ENCODE measurements at regions of chr19 and their contacts with region 1.

Region 1: DNA sequence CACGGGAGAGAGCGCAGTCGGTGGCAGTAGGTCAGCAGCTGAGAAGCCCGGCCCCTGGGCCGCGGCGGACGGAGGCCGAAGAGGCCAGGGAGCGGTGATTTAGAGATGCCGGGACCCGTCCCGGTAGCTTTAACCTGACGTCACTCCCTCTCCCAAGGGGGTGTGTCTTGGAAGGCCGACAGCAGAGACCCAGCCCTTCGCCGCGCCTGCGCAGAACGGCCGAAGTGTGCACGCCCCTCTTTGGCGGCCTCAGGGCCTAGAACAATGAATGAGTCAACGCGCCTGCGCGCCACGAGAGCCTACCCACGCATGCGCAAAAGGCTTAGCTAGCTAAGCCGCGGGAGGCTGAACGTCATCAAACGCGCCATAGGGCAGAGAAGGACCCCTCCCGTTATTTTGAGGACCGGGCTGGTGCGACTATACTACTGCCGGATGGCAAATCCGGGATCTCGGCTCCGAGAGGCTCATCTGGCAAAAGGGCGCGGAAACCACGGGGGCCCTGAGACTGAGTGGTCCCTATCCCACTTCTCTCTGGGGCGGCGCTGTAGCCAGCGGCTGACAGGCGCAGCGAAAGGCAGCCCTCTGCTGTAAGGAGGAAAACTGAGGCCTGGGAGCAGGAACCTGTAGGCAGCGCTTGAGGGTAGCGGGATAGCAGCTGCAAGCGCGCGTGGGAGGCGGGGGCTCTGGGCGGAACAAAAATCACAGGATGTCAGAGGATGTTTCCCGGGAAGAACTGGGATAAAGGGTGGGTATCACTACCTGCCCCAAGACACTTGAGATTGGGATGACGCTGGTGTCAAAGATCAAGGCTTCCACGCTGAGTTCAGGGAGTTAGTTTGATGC is at the starts of genes IRGQ and ZNF576:
- DNase-seq: peak; percentile 100
- H3K4me3 ChIP-seq: peak within 1 kb of the TSS; percentile 86
- H3K27ac ChIP-seq: peak within 1 kb of the TSS; percentile 77
- H3K4me1 ChIP-seq: peaks cover 13% of the 10 kb centered on the region
- CTCF ChIP-seq: peak; percentile 46; the same call in 1 of the 2 replicates
- total RNA-seq, gene IRGQ: 6.4 and 23.0 TPM in 2 replicates
- total RNA-seq, gene ZNF576: 11.6 and 20.2 TPM in 2 replicates

Region 2: DNA sequence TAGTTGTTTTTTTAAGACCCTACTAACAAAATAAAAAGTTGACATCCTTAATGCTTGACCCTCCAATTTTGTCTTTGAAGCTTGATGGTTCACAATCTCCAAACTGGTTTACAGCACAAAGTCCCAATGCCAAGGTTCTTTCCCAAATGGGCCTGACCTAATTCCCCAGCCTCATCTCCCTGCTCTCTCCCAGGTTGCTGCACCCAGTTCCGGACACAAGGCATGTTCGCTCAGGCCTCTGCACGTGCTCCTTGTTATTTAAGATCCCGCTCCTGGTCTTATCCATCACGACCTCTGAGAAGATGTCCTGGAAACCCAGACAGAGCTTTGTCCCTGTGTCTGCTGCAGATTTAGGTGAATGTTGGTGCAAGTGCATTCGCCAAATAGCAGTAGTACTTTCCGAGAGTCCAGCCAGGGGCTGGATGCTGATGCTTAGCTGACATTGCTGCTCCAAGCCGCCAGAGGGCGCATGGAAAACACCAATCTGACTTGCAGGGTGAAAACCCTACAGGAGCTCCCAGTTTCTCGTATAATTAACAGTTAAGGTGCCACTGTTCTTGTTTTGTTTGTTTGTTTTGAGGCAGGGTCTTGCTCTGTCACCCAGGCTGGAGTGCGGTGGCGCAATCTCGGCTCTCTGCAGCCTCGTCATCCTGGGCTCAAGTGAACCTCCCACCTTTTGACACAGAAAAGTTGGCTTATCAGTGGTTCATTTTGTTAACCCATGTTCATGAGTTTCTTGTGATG is 149.3 kb before region 1 on chr19:
- CTCF ChIA-PET with region 1: no interaction called
- POLR2A ChIA-PET with region 1: no interaction called
- intact Hi-C with region 1: loop called (anchors 10 kb)
- DNase-seq: peak; percentile 77
- H3K4me3 ChIP-seq: no peak overlapping the region
- H3K27ac ChIP-seq: no peak overlapping the region
- H3K4me1 ChIP-seq: no peaks in the 10 kb centered on the region
- CTCF ChIP-seq: peak; percentile 94

Region 3: GRCh38 chr19:43532962-43533545 is 63.2 kb before region 1 on chr19 and contains the start of gene ZNF575:
- CTCF ChIA-PET with region 1: interaction called, 5 read pairs
- POLR2A ChIA-PET with region 1: no interaction called
- intact Hi-C with region 1: loop called (anchors 10 kb)
- DNase-seq: peak; percentile 75
- H3K4me3 ChIP-seq: peak within 1 kb of the TSS; percentile 61
- H3K27ac ChIP-seq: peak within 1 kb of the TSS; percentile 40
- H3K4me1 ChIP-seq: peaks cover 20% of the 10 kb centered on the region
- CTCF ChIP-seq: no peak
- total RNA-seq, gene ZNF575: not detected in 2 replicates

Region 4: DNA sequence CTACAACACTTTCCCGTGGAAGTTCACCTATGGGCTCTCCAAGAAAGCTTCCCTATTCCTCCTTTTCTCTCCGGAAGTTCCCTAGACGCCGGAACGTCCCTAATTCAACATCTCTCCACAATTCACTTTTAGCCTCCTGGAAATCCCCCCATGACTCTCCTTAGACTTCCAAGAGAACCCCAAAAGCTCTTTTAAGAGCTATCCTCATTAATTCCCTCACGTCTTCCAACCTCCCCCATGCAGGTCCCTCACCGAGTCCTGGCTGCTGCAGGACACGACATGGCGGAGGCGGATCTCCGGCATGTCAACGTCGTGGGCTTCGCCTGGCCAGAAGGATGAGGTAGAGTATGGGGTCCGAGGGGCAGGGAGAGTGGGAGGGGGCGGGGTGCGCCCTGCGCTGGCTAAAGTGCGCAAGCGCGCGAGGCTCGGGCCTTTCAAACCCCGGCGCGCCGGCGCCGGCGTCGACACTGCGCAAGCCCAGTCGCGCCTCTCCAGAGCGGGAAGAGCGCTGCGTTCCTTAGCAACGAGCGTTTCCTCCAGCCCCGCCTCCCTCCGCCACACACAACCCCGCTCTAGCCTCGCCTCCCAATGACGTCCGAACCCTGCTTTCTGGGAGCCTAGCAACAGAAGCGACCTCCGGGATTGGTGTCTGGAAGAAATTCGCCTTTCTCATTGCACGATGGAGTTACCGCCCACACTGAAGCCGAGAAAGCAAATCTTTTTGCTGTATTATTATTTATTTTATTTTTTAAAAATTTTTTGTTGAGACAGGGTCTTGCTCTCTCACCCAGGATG is 20.9 kb before region 1 on chr19 and contains the starts of genes PINLYP and XRCC1:
- CTCF ChIA-PET with region 1: no interaction called
- POLR2A ChIA-PET with region 1: interaction called, 8 read pairs
- intact Hi-C with region 1: loop called (anchors 1 kb)
- DNase-seq: peak; percentile 98
- H3K4me3 ChIP-seq: peak within 1 kb of the TSS; percentile 89
- H3K27ac ChIP-seq: peak within 1 kb of the TSS; percentile 37
- H3K4me1 ChIP-seq: peaks cover 15% of the 10 kb centered on the region
- CTCF ChIP-seq: no peak
- total RNA-seq, gene PINLYP: 4.9 and 11.5 TPM in 2 replicates
- total RNA-seq, gene XRCC1: 28.7 and 35.9 TPM in 2 replicates

Region 5: DNA sequence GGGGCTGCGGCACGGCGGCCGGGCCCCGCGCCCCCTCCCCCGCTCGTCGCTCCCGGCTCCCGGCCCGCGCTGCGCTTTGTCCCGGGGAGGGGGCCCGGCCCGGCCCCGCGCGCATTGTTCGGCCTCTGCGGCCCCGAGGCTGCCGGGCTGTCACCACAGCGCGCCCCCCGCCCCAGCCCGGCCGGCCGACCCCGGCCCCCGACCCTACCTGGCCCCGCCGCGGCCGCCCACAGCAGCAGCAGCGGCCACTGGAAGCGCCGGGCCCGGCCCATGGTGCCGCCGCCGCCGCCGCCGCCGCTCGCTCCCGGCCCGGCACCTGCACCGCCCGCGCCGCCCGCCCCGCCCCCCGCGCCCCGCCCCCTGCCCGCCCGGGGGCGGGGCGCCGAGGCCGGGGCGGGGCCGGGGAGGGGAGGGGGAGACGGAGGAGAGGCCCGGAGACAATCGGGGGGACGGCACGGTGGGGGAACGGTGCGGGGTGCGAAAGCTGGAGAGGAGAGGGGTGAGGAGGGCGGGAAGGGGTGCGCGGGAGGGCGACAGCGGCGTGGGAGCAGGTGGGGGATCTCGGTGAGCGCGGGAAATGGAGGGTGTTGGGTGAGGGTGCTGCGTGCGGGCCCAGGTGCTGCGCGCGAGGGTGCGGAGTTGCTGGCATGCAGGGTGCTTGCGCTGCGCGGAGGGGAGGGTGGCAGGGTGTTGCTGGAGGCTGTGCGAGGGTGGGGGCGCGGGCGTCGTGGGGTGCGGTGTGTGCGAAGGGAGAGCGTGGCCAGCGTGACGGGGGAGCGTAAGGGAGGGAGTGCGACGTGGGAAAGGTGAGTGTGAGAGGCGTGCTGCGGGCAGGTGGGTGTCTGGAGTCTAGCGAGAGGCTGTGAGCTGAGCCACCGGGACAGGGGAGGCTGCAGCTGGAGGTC is 43.6 kb after region 1 on chr19 and contains the start of gene CADM4:
- CTCF ChIA-PET with region 1: no interaction called
- POLR2A ChIA-PET with region 1: no interaction called
- intact Hi-C with region 1: no loop called
- DNase-seq: no peak
- H3K4me3 ChIP-seq: peak within 1 kb of the TSS; percentile 31
- H3K27ac ChIP-seq: no peak within 1 kb of the TSS
- H3K4me1 ChIP-seq: peaks cover 8% of the 10 kb centered on the region
- CTCF ChIP-seq: no peak
- total RNA-seq, gene CADM4: 0.05 TPM in 1 of 2 replicates, not detected in the other

Region 6: DNA sequence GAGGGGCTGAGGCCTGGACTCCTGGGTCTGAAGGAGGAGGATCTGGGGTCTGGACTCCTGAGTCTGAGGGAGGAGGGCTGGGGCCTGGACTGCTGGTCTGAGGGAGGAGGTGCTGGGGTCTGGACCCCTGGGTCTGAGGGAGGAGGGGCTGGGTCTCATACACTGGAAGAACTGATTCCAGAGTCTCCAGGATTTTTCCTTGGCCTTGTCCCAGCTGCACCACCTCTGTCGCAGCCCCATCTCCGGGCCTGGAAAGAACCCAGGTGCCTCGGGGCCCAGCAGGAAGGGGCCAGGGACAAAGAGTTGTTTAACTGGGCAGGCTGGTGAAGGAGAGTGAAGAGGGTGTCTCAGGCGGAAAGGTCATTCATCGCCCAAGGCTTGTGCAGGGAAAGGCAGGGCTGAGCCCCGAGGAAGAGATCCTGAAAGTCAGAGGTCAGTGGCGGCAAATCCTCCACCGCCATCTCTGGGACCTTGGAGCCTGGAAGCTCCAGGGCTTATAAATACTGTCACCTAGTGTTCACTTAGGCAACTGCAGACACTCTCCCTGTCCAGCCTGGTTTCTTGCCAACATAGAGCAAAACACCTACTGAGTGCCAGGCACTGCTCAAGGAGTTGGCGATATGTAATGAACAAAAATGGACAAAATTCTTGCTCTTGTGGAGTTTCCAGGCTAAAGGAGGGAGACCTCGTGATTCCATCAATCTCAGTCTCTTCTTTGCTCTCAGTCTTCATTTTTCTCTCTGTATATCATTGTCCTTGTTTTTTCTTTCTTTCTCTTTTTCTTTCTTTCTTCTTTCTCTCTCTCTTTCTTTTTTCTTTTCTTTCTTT is 189.0 kb after region 1 on chr19:
- CTCF ChIA-PET with region 1: no interaction called
- POLR2A ChIA-PET with region 1: interaction called, 3 read pairs
- intact Hi-C with region 1: loop called (anchors 2 kb)
- DNase-seq: peak; percentile 86
- H3K4me3 ChIP-seq: peak overlapping the region; percentile 56
- H3K27ac ChIP-seq: peak overlapping the region; percentile 98
- H3K4me1 ChIP-seq: peaks cover 53% of the 10 kb centered on the region
- CTCF ChIP-seq: peak; percentile 97

Measured in OCI-LY7 (cell line).